B cell (primary cell): ENCODE measurements at regions of chr6 and their contacts with region 1.

Region 1: GRCh38 chr6:28136585-28137504 is 4.8 kb upstream of the ZKSCAN8 start:
- DNase-seq: peak; percentile 89
- ATAC-seq: peak; percentile 52
- H3K4me3 ChIP-seq: peak overlapping the region; percentile 89 to 99 (median 96)
- H3K4me3 Mint-ChIP-seq: peak overlapping the region; percentile 94
- H3K27ac ChIP-seq: peak overlapping the region; percentile 95 to 97
- H3K27ac Mint-ChIP-seq: peak overlapping the region; percentile 95
- H3K4me1 ChIP-seq: peaks cover 24 to 27% of the 10 kb centered on the region in 2 donors
- H3K4me1 Mint-ChIP-seq: peaks cover 60% of the 10 kb centered on the region
- H3K27me3 ChIP-seq: no peaks in the 10 kb centered on the region
- H3K27me3 Mint-ChIP-seq: no peaks in the 10 kb centered on the region
- CTCF ChIP-seq: no peak

Region 2: GRCh38 chr6:27472617-27473400 is 664.0 kb before region 1 on chr6 and contains the start of gene ZNF184:
- CTCF ChIA-PET with region 1: no interaction called
- POLR2A ChIA-PET with region 1: no interaction called
- intact Hi-C with region 1: loop called (anchors 10 kb)
- DNase-seq: peak; percentile 96
- ATAC-seq: peak; percentile 92
- H3K4me3 ChIP-seq: peak within 1 kb of the TSS; percentile 75 to 93 (median 83)
- H3K4me3 Mint-ChIP-seq: peak within 1 kb of the TSS; percentile 100
- H3K27ac ChIP-seq: peak within 1 kb of the TSS; percentile 89 to 97
- H3K27ac Mint-ChIP-seq: peak within 1 kb of the TSS; percentile 99
- H3K4me1 ChIP-seq: peaks cover 16 to 22% of the 10 kb centered on the region in 2 donors
- H3K4me1 Mint-ChIP-seq: peaks cover 44% of the 10 kb centered on the region
- H3K27me3 ChIP-seq: no peaks in the 10 kb centered on the region
- H3K27me3 Mint-ChIP-seq: no peaks in the 10 kb centered on the region
- CTCF ChIP-seq: peak; percentile 31
- total RNA-seq, gene ZNF184: 11.8 TPM in 2 replicates

Region 3: GRCh38 chr6:28104392-28105244 is 32.2 kb before region 1 on chr6:
- CTCF ChIA-PET with region 1: interaction called, 15 read pairs
- POLR2A ChIA-PET with region 1: interaction called, 11 read pairs
- intact Hi-C with region 1: loop called (anchors 1 kb)
- DNase-seq: peak; percentile 92
- ATAC-seq: peak; percentile 97
- H3K4me3 ChIP-seq: peak overlapping the region; percentile 69 to 78 (median 74)
- H3K4me3 Mint-ChIP-seq: peak overlapping the region; percentile 95
- H3K27ac ChIP-seq: peak overlapping the region; percentile 87 to 93
- H3K27ac Mint-ChIP-seq: peak overlapping the region; percentile 96
- H3K4me1 ChIP-seq: peaks cover 5 to 7% of the 10 kb centered on the region in 2 donors
- H3K4me1 Mint-ChIP-seq: peaks cover 13% of the 10 kb centered on the region
- H3K27me3 ChIP-seq: no peaks in the 10 kb centered on the region
- H3K27me3 Mint-ChIP-seq: peaks cover 4% of the 10 kb centered on the region
- CTCF ChIP-seq: peak; percentile 79

Region 4: DNA sequence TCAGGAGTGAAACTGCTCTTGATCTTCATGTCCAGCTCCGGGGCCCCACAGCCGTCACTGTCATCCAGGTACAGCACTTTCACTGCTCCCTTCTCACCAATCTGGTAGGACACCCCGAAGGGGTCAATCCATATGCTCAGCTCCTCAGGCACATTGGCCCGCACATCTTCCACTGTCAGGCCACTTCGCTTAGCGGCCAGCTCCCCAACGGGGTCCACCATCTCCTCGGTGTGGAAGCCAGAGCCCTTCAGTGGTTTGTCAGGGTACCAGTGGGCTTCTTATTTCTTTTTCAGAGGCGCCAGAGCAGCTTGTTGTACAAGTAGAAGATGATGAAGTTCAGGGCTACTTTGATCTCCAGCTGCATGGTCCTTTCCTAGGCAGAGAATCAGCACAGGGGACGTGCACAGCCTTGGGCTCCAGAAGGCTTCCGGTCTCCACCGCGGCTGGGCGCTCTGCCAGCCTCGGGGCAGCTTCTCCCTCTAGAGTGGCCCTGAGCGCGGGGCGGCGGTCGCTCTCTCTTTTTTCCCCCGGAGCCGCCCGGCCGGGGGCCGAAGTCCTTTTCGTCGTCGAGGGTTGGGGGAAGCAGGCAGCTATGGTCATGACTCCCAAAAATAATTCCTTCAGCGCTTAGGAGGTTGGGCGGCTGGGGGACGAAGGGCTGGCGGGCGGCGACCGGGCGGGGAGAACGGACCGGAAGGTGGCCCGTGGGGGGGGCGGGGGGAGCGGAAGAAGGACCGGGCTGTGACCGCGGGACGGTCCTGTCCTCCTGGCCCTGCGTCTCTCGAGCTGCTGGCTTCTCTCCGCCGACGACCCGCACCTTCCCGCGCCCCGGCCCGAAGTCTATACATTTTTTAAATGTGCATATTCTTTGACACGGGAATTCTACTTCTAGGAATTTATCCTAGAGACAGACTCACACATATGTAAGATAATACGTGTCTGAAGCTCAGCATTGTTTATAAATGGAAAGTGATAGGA is 81.7 kb after region 1 on chr6:
- CTCF ChIA-PET with region 1: no interaction called
- POLR2A ChIA-PET with region 1: interaction called, 3 read pairs
- intact Hi-C with region 1: loop called (anchors 5 kb)
- DNase-seq: peak; percentile 48
- ATAC-seq: peak; percentile 78
- H3K4me3 ChIP-seq: peak overlapping the region; percentile 32 to 79 (median 64)
- H3K4me3 Mint-ChIP-seq: peak overlapping the region; percentile 93
- H3K27ac ChIP-seq: peak overlapping the region in 1 of 2 donors; percentile 17
- H3K27ac Mint-ChIP-seq: peak overlapping the region; percentile 78
- H3K4me1 ChIP-seq: peaks cover 5 to 6% of the 10 kb centered on the region in 2 donors
- H3K4me1 Mint-ChIP-seq: peaks cover 6% of the 10 kb centered on the region
- H3K27me3 ChIP-seq: peaks cover 0 to 50% (median 35%) of the 10 kb centered on the region in 4 experiments
- H3K27me3 Mint-ChIP-seq: peaks cover 54% of the 10 kb centered on the region
- CTCF ChIP-seq: no peak

Region 5: DNA sequence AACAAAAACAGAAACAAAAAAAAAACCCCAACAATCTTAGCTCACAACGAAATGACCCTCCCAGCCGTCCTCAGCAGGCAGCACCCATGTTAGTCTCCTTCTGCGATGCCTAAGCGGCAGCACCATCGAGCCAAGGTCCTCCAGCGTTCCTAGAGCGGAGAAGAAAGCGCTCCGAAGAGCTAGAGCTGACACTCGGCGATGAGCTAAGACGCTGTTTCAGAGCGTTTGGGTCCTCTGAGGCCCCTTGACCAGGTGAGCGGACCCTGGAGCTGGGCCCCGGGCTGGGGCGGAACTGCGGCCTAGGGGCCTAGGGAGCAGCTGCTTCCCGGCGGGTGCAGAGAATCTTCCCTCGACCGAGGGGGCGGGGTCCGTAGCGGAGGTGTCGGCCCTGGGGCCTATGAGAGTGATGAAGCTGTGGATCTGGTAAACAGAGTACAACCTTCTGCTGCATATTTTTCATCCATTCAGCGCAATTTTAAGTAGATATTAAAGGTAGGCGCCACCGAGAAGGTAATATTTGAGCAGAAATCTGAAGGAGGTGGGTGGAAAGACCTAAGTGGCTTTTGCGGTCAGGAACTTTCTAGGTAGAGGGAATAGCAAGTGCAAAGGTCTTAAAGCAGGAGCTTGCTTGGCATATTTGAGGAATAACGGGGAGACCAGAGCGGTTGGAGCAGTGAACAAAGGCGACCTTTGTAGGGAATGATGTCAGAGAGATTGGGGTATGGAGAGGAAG is 130.3 kb after region 1 on chr6 and contains the start of gene ZSCAN26:
- CTCF ChIA-PET with region 1: interaction called, 3 read pairs
- POLR2A ChIA-PET with region 1: interaction called, 8 read pairs
- intact Hi-C with region 1: loop called (anchors 2 kb)
- DNase-seq: peak; percentile 95
- ATAC-seq: peak; percentile 96
- H3K4me3 ChIP-seq: peak within 1 kb of the TSS; percentile 62 to 100 (median 72)
- H3K4me3 Mint-ChIP-seq: no peak within 1 kb of the TSS
- H3K27ac ChIP-seq: peak within 1 kb of the TSS; percentile 66 to 77
- H3K27ac Mint-ChIP-seq: no peak within 1 kb of the TSS
- H3K4me1 ChIP-seq: peaks cover 10 to 18% of the 10 kb centered on the region in 2 donors
- H3K4me1 Mint-ChIP-seq: peaks cover 10% of the 10 kb centered on the region
- H3K27me3 ChIP-seq: peaks cover 0 to 3% (median 0%) of the 10 kb centered on the region in 4 experiments
- H3K27me3 Mint-ChIP-seq: no peaks in the 10 kb centered on the region
- CTCF ChIP-seq: no peak
- total RNA-seq, gene ZSCAN26: 29.3 and 31.8 TPM in 2 replicates

Region 6: GRCh38 chr6:28355743-28356665 is 219.2 kb after region 1 on chr6:
- CTCF ChIA-PET with region 1: interaction called, 33 read pairs
- POLR2A ChIA-PET with region 1: no interaction called
- intact Hi-C with region 1: loop called (anchors 1 kb)
- DNase-seq: peak; percentile 81
- ATAC-seq: peak; percentile 87
- H3K4me3 ChIP-seq: peak overlapping the region; percentile 48 to 70 (median 61)
- H3K4me3 Mint-ChIP-seq: peak overlapping the region; percentile 99
- H3K27ac ChIP-seq: no peak overlapping the region
- H3K27ac Mint-ChIP-seq: peak overlapping the region; percentile 87
- H3K4me1 ChIP-seq: peaks cover 2 to 17% of the 10 kb centered on the region in 2 donors
- H3K4me1 Mint-ChIP-seq: peaks cover 18% of the 10 kb centered on the region
- H3K27me3 ChIP-seq: no peaks in the 10 kb centered on the region
- H3K27me3 Mint-ChIP-seq: no peaks in the 10 kb centered on the region
- CTCF ChIP-seq: peak; percentile 84

Region 7: DNA sequence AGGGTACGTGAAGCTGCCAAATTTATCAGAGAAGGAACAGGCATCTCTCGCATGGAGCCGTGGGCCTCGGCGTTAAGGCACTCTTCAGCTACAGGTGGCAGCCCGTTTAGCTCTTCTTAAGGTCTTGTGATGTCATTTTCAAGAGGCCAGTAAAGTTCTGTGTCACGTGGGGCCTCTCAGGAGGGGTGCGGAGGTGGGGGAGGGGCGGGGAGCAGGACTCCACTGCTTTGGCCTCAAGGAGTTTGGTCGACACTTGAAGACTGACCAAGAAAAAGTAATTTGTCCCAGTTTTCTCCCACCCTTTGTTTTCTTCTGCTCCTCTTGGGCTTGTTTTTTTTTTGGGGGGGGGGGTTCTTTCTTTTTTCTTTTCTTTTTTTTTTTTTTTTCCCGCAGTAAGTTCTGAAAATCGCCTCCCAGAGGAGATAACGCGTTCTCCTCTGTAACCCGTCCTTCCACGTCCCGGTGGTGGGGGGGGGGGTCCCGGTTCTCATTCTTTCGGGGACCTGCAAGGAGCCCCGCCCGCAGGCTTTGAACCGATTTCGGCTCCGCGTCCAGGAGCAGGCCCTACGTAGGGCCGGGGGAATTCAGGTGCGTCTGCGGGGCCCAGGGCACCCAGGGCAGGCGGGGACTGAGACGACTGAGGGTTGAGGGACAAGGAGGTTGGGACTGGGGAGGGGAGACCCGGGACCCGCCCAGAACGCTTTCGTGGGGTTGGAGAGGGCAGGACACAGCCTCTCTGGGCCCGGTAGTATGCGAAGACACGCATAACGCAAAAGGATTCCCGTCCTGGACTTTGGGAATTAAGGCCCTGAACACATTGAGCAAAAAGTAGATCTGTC is 352.7 kb after region 1 on chr6:
- CTCF ChIA-PET with region 1: no interaction called
- POLR2A ChIA-PET with region 1: no interaction called
- intact Hi-C with region 1: no loop called
- DNase-seq: peak; percentile 34
- ATAC-seq: no peak
- H3K4me3 ChIP-seq: peak overlapping the region in 4 of 5 experiments; percentile 6 to 49 (median 18)
- H3K4me3 Mint-ChIP-seq: peak overlapping the region; percentile 67
- H3K27ac ChIP-seq: no peak overlapping the region
- H3K27ac Mint-ChIP-seq: no peak overlapping the region
- H3K4me1 ChIP-seq: peaks cover 14 to 21% of the 10 kb centered on the region in 2 donors
- H3K4me1 Mint-ChIP-seq: peaks cover 24% of the 10 kb centered on the region
- H3K27me3 ChIP-seq: peaks cover 0 to 40% (median 32%) of the 10 kb centered on the region in 4 experiments
- H3K27me3 Mint-ChIP-seq: peaks cover 84% of the 10 kb centered on the region
- CTCF ChIP-seq: no peak